Right cardiac atrium (tissue), 5 donors: ENCODE measurements at regions of chr10 and their contacts with region 1.

Region 1: DNA sequence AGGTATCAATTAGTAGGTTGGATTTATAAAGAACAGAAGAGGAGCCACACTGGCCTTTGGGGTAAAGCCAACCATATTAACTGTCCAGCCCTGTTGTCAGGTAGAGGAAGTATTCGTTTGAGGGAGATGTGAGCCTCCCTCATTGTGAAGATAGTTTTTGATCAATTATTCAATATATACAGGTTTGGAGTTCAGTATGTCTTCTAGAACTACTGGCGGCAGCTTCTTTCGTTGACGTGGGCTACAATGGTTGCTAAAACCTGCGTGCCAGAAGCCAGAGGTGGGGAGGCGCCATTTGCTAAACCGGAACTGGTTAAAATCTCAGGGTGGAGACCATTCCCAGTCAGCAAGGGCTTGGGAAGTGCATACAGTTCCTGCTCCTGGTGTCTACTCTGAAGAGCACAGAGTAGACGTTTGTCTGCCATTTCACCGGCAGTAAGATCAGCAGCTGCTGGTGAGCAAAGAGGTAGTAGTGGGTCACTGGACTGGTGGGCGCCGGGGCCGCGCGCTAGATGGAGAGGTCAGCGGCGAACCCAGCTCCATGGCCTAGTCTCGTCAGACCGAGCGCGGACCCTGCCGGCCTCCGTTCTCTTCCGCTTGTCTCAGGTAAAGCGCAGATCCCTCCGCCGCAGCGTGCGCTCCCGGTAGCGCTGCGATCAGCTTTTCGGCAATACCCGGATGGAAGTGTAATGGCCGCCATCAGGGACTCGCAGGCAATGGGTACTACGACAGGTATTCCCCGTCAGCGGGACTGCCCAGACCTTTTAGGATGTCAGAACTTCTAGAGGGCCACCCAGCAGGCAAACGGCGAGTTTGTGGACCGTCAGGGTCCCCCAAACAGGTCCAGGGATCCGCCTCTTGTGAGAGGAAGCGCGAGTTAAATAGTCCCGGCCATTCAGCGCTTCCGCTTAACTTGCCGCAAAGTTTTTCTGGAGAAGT is at the start of gene ZNF518A:
- DNase-seq: peak; percentile 95 to 97 (median 95)
- ATAC-seq: peak; percentile 98 to 99
- H3K4me3 ChIP-seq: peak within 1 kb of the TSS; percentile 97
- H3K27ac ChIP-seq: peak within 1 kb of the TSS; percentile 100
- H3K4me1 ChIP-seq: no peaks in the 10 kb centered on the region
- H3K27me3 ChIP-seq: peaks cover 11% of the 10 kb centered on the region
- total RNA-seq, gene ZNF518A: 13.2 to 13.7 (median 13.3) TPM

Region 2: GRCh38 chr10:96089670-96090462 is 39.8 kb before region 1 on chr10:
- intact Hi-C with region 1: loop called in 3 of 4 experiments (anchors 1 to 5 kb)
- DNase-seq: peak; percentile 94 to 98 (median 97)
- ATAC-seq: peak; percentile 98 to 99
- H3K4me3 ChIP-seq: peak overlapping the region; percentile 87
- H3K27ac ChIP-seq: peak overlapping the region; percentile 96
- H3K4me1 ChIP-seq: no peaks in the 10 kb centered on the region
- H3K27me3 ChIP-seq: peaks cover 15% of the 10 kb centered on the region

Region 3: DNA sequence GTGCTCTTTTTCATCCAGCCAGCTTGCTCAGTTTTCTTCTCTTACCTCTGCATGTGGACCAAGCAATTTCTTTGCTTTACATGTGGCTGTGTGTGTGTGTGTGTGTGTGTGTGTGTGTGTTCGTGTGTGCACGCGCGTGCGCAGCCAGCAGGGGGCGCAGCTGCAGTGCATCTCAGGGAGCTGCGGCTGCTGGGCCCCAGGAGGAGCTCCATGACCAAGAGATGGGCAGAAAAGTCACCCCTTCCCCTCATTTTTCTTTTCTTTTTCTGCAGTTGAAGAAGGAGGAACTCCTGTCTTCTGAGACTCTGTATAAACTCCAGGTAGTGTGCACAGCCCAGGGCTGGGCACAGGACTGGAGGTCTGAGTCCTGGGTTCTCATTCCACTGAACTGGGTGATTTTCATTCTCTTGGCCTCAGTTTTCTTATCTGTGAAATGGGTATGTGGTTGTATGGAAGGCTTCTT is 99.9 kb after region 1 on chr10:
- intact Hi-C with region 1: no loop called
- DNase-seq: peak; percentile 77 to 90 (median 89)
- ATAC-seq: peak; percentile 48 to 68
- H3K4me3 ChIP-seq: no peak overlapping the region
- H3K27ac ChIP-seq: no peak overlapping the region
- H3K4me1 ChIP-seq: no peaks in the 10 kb centered on the region
- H3K27me3 ChIP-seq: no peaks in the 10 kb centered on the region